HCT116 (cell line): ENCODE measurements at regions of chr10 and their contacts with region 1.

Region 1: GRCh38 chr10:96138102-96138501 is 8.0 kb downstream of the ZNF518A start:
- DNase-seq: no peak
- ATAC-seq: no peak
- H3K4me3 ChIP-seq: no peak overlapping the region
- H3K27ac ChIP-seq: no peak overlapping the region
- H3K4me1 ChIP-seq: no peaks in the 10 kb centered on the region
- H3K27me3 ChIP-seq: no peaks in the 10 kb centered on the region
- CTCF ChIP-seq: no peak
- POLR2A ChIP-seq: no peak
- RAD21 ChIP-seq: no peak

Region 2: GRCh38 chr10:95987685-95988426 is 150.2 kb before region 1 on chr10:
- CTCF ChIA-PET with region 1: no interaction called
- POLR2A ChIA-PET with region 1: no interaction called
- RAD21 ChIA-PET with region 1: no interaction called
- intact Hi-C with region 1: no loop called
- DNase-seq: no peak
- ATAC-seq: no peak
- H3K4me3 ChIP-seq: no peak overlapping the region
- H3K27ac ChIP-seq: no peak overlapping the region
- H3K4me1 ChIP-seq: no peaks in the 10 kb centered on the region
- H3K27me3 ChIP-seq: peaks cover 13% of the 10 kb centered on the region; the same call in 1 of the 2 replicates
- CTCF ChIP-seq: no peak
- POLR2A ChIP-seq: no peak
- RAD21 ChIP-seq: no peak

Region 3: GRCh38 chr10:96292971-96293920 is 155.1 kb after region 1 on chr10:
- CTCF ChIA-PET with region 1: no interaction called
- POLR2A ChIA-PET with region 1: no interaction called
- RAD21 ChIA-PET with region 1: no interaction called
- intact Hi-C with region 1: loop called (anchors 10 kb)
- DNase-seq: peak; percentile 47
- ATAC-seq: peak; percentile 95
- H3K4me3 ChIP-seq: no peak overlapping the region
- H3K27ac ChIP-seq: no peak overlapping the region
- H3K4me1 ChIP-seq: peaks cover 0 to under 1% of the 10 kb centered on the region in 2 experiments; a peak in 1 of 4 replicates
- H3K27me3 ChIP-seq: peaks cover 7% of the 10 kb centered on the region; the same call in 1 of the 2 replicates
- CTCF ChIP-seq: peak; percentile 50 to 92 (median 67)
- POLR2A ChIP-seq: no peak
- RAD21 ChIP-seq: peak; percentile 86